ENCODE measurements at regions of chr2 and their contacts with region 1.

Region 1: DNA sequence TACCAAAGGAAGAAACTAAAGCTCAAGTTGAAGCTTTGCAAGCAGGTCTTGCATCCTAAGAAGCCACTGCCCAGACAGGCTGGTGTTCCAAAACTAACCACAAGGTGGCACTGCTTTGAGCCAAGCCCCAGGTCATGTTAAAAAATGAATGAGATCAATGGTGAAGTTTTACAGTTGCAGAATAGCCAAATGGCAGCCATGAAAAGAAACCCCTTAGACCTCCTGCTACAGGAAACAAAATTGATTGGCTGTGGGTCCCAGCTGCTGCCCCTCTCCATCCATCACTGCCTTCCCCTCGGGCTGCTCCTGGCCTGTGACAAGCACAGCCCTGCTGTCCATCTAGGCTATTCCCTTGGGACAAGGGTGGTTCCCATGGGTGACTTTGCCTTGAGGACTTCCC is 20.7 kb upstream of the MREG start:
- DNase-seq: peak; percentile 50 to 83 (median 69)
- ATAC-seq: peak; percentile 89
- H3K4me3 ChIP-seq: no peak overlapping the region
- H3K4me3 Mint-ChIP-seq: no peak overlapping the region
- H3K27ac ChIP-seq: no peak overlapping the region
- H3K27ac Mint-ChIP-seq: peak overlapping the region in 1 of 9 donors; percentile 13
- H3K4me1 ChIP-seq: peaks cover 0 to 10% of the 10 kb centered on the region in 2 donors
- H3K4me1 Mint-ChIP-seq: peaks cover 15 to 31% (median 25%) of the 10 kb centered on the region in 7 donors
- H3K27me3 ChIP-seq: no peaks in the 10 kb centered on the region
- H3K27me3 Mint-ChIP-seq: no peaks in the 10 kb centered on the region

Region 2: DNA sequence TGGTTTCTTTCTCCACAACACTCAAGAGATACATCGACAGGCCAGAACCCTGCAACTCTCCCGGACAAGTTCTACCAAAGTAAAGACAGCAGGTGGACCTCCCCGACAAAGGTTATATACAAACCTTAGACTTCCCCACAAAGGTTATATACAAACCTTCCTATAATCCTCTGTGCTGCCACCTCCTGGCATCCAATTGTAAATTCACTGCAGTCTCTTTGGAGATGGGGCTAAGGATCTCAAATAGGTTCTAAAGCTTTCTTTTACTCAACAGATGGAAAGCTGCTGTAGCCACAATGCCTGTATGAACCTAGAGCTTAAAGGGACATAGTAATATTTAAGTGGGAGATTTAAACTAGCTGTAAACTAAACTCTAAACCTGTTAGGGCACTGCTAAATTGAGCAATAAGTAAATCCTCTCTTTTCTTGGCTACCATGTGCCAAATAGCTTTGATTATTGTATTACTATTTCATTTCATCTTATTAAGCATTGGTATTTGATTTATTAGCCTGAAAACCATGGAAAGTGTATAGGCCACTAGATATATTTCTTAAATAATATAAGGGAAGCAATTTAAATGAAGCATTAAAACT is 10.9 kb before region 1 on chr2:
- CTCF ChIA-PET with region 1: interaction called, 12 read pairs
- POLR2A ChIA-PET with region 1: interaction called, 3 read pairs
- intact Hi-C with region 1: loop called in 1 of 2 experiments (anchors 2 kb)
- DNase-seq: peak in 6 of 9 donors; percentile 8 to 35 (median 30)
- ATAC-seq: peak; percentile 74
- H3K4me3 ChIP-seq: no peak overlapping the region
- H3K4me3 Mint-ChIP-seq: no peak overlapping the region
- H3K27ac ChIP-seq: no peak overlapping the region
- H3K27ac Mint-ChIP-seq: no peak overlapping the region
- H3K4me1 ChIP-seq: no peaks in the 10 kb centered on the region
- H3K4me1 Mint-ChIP-seq: peaks cover 0 to 15% (median 5%) of the 10 kb centered on the region in 7 donors
- H3K27me3 ChIP-seq: no peaks in the 10 kb centered on the region
- H3K27me3 Mint-ChIP-seq: no peaks in the 10 kb centered on the region

Region 3: DNA sequence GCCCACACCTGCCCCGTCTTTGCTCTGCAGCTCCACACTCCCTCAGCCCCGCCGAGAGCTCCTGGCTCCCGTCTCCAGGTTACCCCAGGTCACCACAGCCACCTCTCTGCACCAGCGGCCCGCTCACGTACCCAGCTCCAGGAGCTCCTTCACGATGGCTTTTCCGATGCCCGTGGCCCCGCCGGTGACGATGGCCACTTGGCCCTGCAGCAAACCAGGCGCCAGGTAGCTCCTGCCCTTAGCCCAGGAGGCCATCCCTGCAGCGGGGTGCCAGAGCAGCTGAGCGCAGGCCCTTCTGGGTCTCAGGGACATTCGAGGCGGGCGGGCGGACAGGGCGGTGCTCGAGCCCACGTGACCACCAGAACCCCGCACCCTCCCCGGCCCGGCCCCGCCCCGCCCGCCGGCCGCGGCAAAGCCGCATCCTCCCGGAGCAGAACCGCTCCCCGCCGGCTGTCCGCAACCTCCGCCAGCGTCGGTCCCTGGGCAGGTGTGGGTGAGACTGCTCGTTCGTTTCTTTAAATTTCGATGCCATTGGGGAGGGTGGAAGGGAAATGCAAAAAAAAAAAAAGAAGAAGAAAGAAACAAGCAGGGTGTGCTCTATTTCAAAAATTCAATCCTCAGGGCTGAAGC is 47.5 kb after region 1 on chr2 and contains the starts of genes PECR and TMEM169:
- CTCF ChIA-PET with region 1: interaction called, 7 read pairs
- POLR2A ChIA-PET with region 1: interaction called, 5 read pairs
- intact Hi-C with region 1: loop called (anchors 2 kb)
- DNase-seq: peak; percentile 39 to 81 (median 62)
- ATAC-seq: peak; percentile 93
- H3K4me3 ChIP-seq: peak within 1 kb of the TSS; percentile 95
- H3K4me3 Mint-ChIP-seq: peak within 1 kb of the TSS; percentile 76 to 97 (median 94)
- H3K27ac ChIP-seq: peak within 1 kb of the TSS; percentile 77
- H3K27ac Mint-ChIP-seq: peak within 1 kb of the TSS; percentile 86 to 97 (median 95)
- H3K4me1 ChIP-seq: peaks cover 42 to 57% of the 10 kb centered on the region in 2 donors
- H3K4me1 Mint-ChIP-seq: peaks cover 47 to 76% (median 62%) of the 10 kb centered on the region in 7 donors
- H3K27me3 ChIP-seq: no peaks in the 10 kb centered on the region
- H3K27me3 Mint-ChIP-seq: no peaks in the 10 kb centered on the region
- total RNA-seq, gene PECR: 15.7 to 29.9 (median 20.6) TPM
- total RNA-seq, gene TMEM169: 2.0 to 5.1 (median 2.6) TPM

Region 4: GRCh38 chr2:216139884-216140283 is 105.8 kb after region 1 on chr2:
- CTCF ChIA-PET with region 1: interaction called, 10 read pairs
- POLR2A ChIA-PET with region 1: no interaction called
- intact Hi-C with region 1: loop called (anchors 1 kb)
- DNase-seq: peak in 7 of 9 donors; percentile 26 to 64 (median 52)
- ATAC-seq: peak; percentile 81
- H3K4me3 ChIP-seq: no peak overlapping the region
- H3K4me3 Mint-ChIP-seq: no peak overlapping the region
- H3K27ac ChIP-seq: no peak overlapping the region
- H3K27ac Mint-ChIP-seq: peak overlapping the region in 3 of 9 donors; percentile 22 to 48 (median 31)
- H3K4me1 ChIP-seq: no peaks in the 10 kb centered on the region
- H3K4me1 Mint-ChIP-seq: peaks cover 7 to 44% (median 37%) of the 10 kb centered on the region in 7 donors
- H3K27me3 ChIP-seq: no peaks in the 10 kb centered on the region
- H3K27me3 Mint-ChIP-seq: no peaks in the 10 kb centered on the region

Region 5: GRCh38 chr2:216426938-216427337 is 392.9 kb after region 1 on chr2:
- CTCF ChIA-PET with region 1: no interaction called
- POLR2A ChIA-PET with region 1: no interaction called
- intact Hi-C with region 1: no loop called
- DNase-seq: no peak
- ATAC-seq: no peak
- H3K4me3 ChIP-seq: no peak overlapping the region
- H3K4me3 Mint-ChIP-seq: no peak overlapping the region
- H3K27ac ChIP-seq: no peak overlapping the region
- H3K27ac Mint-ChIP-seq: peak overlapping the region in 1 of 9 donors; percentile 72
- H3K4me1 ChIP-seq: no peaks in the 10 kb centered on the region
- H3K4me1 Mint-ChIP-seq: peaks cover 0 to 13% (median 4%) of the 10 kb centered on the region in 7 donors
- H3K27me3 ChIP-seq: no peaks in the 10 kb centered on the region
- H3K27me3 Mint-ChIP-seq: no peaks in the 10 kb centered on the region

Region 6: GRCh38 chr2:216666461-216667233 is 632.6 kb after region 1 on chr2:
- CTCF ChIA-PET with region 1: interaction called, 5 read pairs
- POLR2A ChIA-PET with region 1: no interaction called
- intact Hi-C with region 1: loop called in 1 of 2 experiments (anchors 2 kb)
- DNase-seq: peak; percentile 36 to 75 (median 62)
- ATAC-seq: peak; percentile 88
- H3K4me3 ChIP-seq: no peak overlapping the region
- H3K4me3 Mint-ChIP-seq: no peak overlapping the region
- H3K27ac ChIP-seq: no peak overlapping the region
- H3K27ac Mint-ChIP-seq: no peak overlapping the region
- H3K4me1 ChIP-seq: no peaks in the 10 kb centered on the region
- H3K4me1 Mint-ChIP-seq: peaks cover 0 to 2% (median 0%) of the 10 kb centered on the region in 7 donors
- H3K27me3 ChIP-seq: no peaks in the 10 kb centered on the region
- H3K27me3 Mint-ChIP-seq: peaks cover 0 to 12% (median 10%) of the 10 kb centered on the region in 5 donors